Activated CD8-positive, alpha-beta T cell treated with anti-CD3 and anti-CD28 coated beads for 36 hours (primary cell): ENCODE measurements at regions of chr2 and their contacts with region 1.

Region 1: DNA sequence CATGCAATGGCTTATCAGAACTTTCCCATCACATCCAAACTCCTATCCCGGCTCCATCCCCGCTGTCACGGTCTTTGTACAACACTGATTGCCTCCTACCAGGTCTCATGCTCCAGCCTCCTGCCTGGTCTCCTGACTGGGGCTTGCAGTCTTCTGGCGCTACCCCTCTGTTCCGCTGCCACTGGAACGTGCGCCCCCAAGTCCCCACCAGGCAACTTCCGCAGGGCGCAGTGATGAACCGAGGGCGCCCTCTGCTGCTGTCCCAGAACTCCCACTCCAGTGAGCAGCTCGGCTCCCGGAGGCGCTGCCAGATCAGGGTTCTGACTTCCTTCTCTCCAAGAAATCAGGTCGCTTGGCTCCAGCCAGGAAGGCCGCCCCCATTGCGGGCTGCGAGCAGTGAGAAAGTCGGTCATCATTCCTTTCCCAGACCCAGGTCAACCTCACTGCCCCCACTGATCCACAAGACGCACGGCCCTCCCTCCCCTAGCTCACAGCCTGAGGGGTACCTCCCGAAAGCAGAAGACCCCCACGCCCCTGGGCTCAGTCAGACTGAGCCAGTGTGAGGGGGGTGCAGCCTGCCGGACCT is 43.9 kb upstream of the RAB11FIP5 start:
- DNase-seq: peak; percentile 68
- ATAC-seq: peak; percentile 91
- H3K4me3 Mint-ChIP-seq: no peak overlapping the region
- H3K27ac Mint-ChIP-seq: no peak overlapping the region
- H3K4me1 Mint-ChIP-seq: no peaks in the 10 kb centered on the region
- H3K27me3 Mint-ChIP-seq: peaks cover 24% of the 10 kb centered on the region
- CTCF ChIP-seq: peak; percentile 74

Region 2: DNA sequence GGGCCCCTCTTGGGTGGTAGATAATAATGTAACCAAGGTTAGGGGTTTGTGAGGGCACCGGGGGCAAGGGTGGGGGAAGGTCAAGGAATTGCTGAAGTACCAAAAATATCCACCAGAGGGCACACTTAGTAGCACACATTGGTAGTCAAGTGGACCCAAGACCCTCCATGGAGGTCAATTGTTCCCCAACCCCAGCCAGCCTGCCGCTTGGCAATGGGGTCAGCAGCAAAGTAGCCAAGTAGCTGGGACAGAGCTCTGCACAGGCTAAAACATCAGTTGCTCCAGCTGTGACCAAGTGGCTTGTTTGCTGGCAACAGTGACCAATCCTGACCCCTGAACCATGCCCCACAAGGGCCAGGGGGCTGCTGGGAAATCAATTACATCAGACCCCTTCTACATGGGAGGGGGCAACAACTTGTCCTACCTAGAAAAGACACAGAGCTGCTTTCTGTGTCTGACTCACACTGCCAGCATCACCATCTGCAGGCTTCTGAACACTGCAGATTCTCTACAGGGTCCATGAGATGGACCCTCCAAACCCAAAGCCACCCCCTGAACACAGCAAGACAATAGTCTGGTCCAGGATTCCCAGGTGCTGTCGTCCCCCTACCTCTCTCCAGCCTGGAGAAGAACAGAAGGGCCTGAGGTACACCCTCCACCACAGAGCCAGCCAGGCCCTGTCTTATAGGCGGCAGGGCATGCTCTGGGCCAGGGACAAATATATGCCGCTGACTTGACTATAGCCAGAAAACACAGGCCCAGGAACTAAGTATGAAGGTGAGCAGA is 163.3 kb before region 1 on chr2:
- CTCF ChIA-PET with region 1: interaction called, 18 read pairs
- POLR2A ChIA-PET with region 1: no interaction called
- intact Hi-C with region 1: loop called (anchors 5 kb)
- DNase-seq: peak; percentile 51
- ATAC-seq: peak; percentile 79
- H3K4me3 Mint-ChIP-seq: no peak overlapping the region
- H3K27ac Mint-ChIP-seq: no peak overlapping the region
- H3K4me1 Mint-ChIP-seq: no peaks in the 10 kb centered on the region
- H3K27me3 Mint-ChIP-seq: no peaks in the 10 kb centered on the region
- CTCF ChIP-seq: peak; percentile 81

Region 3: GRCh38 chr2:73091164-73091563 is 65.5 kb before region 1 on chr2:
- CTCF ChIA-PET with region 1: interaction called, 90 read pairs
- POLR2A ChIA-PET with region 1: no interaction called
- intact Hi-C with region 1: no loop called
- DNase-seq: no peak
- ATAC-seq: no peak
- H3K4me3 Mint-ChIP-seq: no peak overlapping the region
- H3K27ac Mint-ChIP-seq: no peak overlapping the region
- H3K4me1 Mint-ChIP-seq: no peaks in the 10 kb centered on the region
- H3K27me3 Mint-ChIP-seq: no peaks in the 10 kb centered on the region
- CTCF ChIP-seq: no peak